Activated CD8-positive, alpha-beta memory T cell treated with anti-CD3 and anti-CD28 coated beads, Interleukin-2, amount 10 ng/mL, durations not matched to agents 7 days and 5 days (primary cell): ENCODE measurements at regions of chr11 and their contacts with region 1.

Region 1: DNA sequence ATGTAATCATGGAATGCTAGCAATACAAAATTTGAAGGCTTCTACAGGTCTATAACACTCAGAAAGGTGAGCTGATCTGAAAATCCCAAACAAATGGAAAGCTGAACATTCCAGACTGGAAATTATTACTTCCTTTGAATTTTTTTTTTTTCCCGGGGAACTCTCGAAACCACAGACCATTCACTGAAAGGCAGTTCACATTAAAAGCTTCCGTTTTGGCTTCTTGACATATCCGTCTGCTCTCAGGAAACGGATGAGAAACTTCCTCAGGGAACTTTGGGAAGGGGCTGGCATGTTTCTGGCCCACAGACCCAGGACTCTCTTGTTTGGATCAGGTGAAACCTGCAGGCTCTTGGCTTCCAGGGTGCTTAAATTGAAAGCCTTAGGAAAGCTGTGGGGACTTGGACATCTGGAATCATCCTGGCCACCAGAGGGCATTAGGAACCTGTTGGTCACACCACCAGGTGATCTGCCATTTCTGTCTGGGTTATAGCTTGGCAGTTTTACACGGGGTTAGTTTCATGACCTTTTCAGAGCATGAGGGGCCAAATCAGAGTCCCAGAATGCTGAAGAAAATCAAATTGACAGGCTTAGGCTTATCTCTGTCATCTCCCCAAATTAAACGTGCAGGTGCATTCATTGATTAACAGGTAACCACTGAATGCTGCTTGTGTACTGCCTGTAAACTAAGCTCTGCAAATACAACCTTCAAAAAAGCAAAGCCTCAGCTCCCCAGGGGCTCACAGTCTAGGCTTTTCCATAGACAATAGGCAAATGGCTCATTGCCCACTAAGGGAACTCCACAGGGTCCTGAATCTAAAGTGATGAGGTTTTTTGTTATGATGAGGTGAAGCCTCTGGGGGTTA is 22.7 kb upstream of the GRAMD1B start:
- DNase-seq: peak; percentile 79
- ATAC-seq: peak; percentile 90
- H3K4me3 Mint-ChIP-seq: peak overlapping the region; percentile 74
- H3K27ac Mint-ChIP-seq: peak overlapping the region; percentile 75
- H3K4me1 Mint-ChIP-seq: peaks cover 48% of the 10 kb centered on the region
- H3K27me3 Mint-ChIP-seq: no peaks in the 10 kb centered on the region

Region 2: DNA sequence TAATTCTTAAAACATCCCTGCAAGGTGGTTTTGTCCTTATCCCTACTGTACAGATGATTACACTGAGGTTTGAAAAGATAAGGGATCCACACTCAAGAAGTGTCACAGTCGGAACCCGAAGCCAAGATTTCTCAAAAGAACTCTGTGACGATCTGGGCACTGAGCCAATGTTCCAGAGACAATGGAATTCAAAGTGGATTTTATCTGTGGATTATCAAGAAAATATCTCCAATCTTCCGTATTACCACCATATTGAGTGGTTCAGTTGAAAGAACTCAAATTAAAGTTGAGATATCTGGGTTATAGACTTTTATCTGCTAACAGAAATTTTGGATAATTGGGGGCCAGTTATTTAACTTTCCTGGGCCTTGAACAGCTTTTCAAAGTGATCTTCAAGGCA is 77.3 kb before region 1 on chr11:
- CTCF ChIA-PET with region 1: no interaction called
- DNase-seq: no peak
- ATAC-seq: no peak
- H3K4me3 Mint-ChIP-seq: no peak overlapping the region
- H3K27ac Mint-ChIP-seq: no peak overlapping the region
- H3K4me1 Mint-ChIP-seq: no peaks in the 10 kb centered on the region
- H3K27me3 Mint-ChIP-seq: peaks cover 16% of the 10 kb centered on the region

Region 3: DNA sequence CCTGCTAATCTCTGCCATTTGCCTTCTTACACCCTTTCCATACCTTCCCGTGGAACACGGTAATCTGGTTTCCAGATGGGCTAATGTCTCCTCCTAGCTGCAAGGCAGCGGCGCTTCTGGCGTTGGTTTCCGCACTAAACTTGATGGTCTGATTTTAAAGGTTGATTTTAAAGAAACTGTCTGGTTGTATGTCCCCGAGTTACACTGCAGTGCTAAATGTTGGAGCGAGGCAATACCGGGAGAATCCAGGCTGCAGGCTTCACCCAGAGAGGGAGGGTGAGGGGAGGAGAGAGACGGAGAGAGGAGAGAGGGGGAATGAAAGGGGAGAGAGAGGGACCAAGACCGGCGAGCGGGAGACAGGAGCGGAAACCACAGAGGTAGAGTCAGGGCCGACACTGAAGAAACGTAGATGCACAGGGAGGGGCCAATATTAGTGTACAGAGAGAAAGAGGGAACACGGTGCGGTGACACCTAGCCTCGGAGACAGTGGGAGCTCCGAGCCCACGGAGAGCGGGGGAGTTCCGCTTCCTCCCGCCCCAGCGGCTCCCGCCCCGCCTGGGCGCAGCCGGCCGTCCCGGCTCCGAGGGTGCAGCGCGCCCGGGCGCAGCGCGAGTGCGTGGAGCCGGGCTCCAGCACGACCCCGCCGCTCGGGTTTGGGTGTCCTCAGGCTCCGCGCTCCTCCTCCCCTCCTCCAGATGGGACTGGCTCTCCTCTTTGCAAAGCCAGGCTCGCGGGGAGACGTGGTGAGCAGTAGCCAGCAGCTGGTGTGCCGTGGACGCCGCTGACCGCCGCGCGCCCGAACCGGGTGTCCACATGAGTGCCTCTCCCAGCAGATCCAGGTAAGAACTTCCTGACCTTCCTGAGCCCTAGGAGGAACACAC is 49.2 kb before region 1 on chr11:
- CTCF ChIA-PET with region 1: interaction called, 23 read pairs
- DNase-seq: peak; percentile 76
- ATAC-seq: peak; percentile 91
- H3K4me3 Mint-ChIP-seq: peak overlapping the region; percentile 86
- H3K27ac Mint-ChIP-seq: peak overlapping the region; percentile 80
- H3K4me1 Mint-ChIP-seq: peaks cover 52% of the 10 kb centered on the region
- H3K27me3 Mint-ChIP-seq: peaks cover 27% of the 10 kb centered on the region

Region 4: GRCh38 chr11:123429913-123430720 is 22.8 kb after region 1 on chr11 and contains the start of gene GRAMD1B:
- CTCF ChIA-PET with region 1: interaction called, 101 read pairs
- DNase-seq: peak; percentile 90
- ATAC-seq: peak; percentile 75
- H3K4me3 Mint-ChIP-seq: peak within 1 kb of the TSS; percentile 89
- H3K27ac Mint-ChIP-seq: peak within 1 kb of the TSS; percentile 93
- H3K4me1 Mint-ChIP-seq: peaks cover 50% of the 10 kb centered on the region
- H3K27me3 Mint-ChIP-seq: no peaks in the 10 kb centered on the region
- total RNA-seq, gene GRAMD1B: 75.6 to 89.9 TPM

Region 5: DNA sequence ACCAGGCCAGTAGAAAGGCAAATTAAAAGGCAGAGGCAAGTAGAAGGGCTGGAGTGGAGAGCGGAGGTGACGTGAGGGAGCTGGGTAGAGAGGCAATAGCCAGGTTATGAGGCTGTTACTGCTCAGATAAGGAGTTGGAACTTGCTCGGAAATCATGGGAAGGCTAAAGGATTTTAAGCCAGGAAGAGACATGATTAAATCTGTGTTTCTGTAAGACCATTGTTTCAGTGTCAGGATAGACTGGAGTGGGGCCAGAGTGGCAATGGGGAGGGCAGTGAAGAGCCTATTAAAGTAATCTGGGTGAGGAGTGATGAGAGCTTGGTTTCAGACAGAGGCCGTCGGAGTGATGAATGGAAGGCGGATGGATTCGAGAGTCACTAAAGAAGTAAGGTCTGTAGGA is 61.7 kb after region 1 on chr11:
- CTCF ChIA-PET with region 1: interaction called, 248 read pairs
- DNase-seq: no peak
- ATAC-seq: no peak
- H3K4me3 Mint-ChIP-seq: no peak overlapping the region
- H3K27ac Mint-ChIP-seq: peak overlapping the region; percentile 10
- H3K4me1 Mint-ChIP-seq: peaks cover 56% of the 10 kb centered on the region
- H3K27me3 Mint-ChIP-seq: no peaks in the 10 kb centered on the region

Region 6: DNA sequence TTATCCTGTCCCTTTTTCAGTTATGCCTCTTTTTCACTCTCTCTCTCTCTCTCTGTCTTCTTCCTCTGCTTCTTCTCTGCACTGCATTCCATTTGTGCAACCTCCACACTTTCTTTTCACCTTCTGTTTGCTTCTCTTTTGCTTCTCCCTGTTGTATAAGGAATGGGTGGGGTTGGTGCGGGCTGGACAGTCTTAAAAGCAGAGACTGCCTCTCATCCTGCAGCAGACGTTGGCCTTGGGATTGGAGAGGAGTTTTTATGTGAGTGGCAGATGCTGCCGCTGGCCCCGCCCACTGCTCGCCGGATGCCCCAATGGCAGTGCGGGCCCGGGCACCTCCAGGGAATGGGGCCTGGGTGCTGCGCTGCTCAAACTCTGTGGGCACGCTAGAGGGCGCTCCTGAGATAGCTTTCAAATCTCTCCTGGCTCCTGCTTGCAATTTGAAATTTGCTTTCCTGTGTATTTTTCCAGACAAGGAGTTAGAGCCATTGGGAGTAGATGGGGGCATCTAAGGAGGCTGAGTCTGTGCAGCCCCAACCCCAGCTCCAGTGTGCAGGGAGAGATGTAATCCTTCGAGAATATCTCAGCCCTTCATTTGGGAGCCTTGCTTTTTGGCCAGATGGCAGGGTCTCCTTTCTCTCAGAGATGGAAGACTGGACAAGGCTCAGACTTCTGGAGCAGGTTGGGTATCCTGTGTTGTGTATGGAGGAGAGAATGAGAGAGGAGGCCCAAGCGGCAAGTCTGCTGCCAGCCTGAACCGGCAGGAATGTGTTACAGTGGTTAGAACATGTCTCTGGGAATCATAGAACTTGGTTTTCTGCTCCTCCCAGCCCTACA is 103.9 kb after region 1 on chr11:
- CTCF ChIA-PET with region 1: interaction called, 12 read pairs
- DNase-seq: peak; percentile 78
- ATAC-seq: peak; percentile 90
- H3K4me3 Mint-ChIP-seq: no peak overlapping the region
- H3K27ac Mint-ChIP-seq: no peak overlapping the region
- H3K4me1 Mint-ChIP-seq: peaks cover 43% of the 10 kb centered on the region
- H3K27me3 Mint-ChIP-seq: no peaks in the 10 kb centered on the region